ENCODE measurements at regions of chr1 and their contacts with region 1.

Region 1: DNA sequence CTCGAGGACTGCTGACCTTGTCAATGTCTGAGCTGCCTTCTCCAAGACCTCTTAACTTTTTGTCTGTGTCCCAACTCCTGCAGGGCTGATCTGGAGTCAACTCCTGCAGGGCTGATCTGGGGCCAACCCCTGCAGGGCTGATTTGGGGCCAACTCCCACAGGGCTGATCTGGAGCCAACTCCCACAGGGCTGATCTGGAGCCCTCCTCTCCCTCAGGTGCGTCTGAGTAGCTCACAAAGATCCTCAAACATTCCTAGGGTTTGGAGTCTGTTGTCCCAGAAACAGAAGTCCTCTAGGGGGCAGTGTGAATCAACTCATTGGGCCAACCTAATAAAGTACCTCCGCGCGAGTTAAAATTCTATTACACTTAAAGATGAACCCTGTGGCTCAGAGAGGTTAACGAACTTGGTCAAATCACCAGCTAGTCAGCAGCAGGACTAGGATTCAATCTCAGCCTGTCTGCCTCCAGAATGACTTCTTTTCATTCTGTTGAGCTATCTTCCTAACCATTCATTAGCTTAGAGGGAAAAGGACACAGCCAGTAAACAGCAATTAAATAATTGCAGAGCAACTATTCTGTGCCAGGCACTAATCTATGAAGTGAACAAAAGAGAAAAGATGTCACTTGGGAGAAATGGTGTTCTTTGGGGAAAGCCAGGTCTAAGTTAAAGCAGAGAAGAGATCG is 17.2 kb upstream of the RLF start:
- DNase-seq: peak; percentile 68
- ATAC-seq: peak; percentile 83
- H3K4me3 Mint-ChIP-seq: no peak overlapping the region
- H3K27ac Mint-ChIP-seq: no peak overlapping the region
- H3K4me1 Mint-ChIP-seq: peaks cover 16% of the 10 kb centered on the region
- H3K27me3 Mint-ChIP-seq: peaks cover 38% of the 10 kb centered on the region

Region 2: DNA sequence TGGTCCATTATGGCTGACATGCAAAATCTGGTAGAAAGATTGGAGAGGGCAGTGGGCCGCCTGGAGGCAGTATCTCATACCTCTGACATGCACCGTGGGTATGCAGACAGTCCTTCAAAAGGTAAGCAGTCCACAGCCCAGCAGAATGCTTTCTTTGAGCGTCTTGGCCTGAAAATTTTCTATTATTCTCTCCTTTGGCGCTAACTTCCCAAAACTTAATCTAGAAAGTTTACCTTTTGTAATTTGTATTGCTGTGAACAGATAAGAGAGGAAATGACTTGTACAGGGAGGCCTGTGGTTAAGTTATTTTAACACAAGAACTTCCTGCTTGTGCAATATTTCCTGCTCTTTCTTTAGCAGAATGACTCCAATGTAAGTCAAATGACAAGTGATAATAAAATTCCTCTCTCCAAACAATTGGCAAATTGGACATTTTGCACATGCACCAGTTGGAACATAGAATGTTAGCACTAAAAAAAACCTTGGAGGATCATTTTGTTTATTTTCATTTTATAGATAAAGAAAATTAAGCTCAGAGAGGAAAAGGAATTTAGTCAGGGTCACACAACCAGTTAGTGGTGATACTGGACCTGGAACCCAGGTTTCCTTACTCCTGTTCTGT is 84.6 kb before region 1 on chr1:
- CTCF ChIA-PET with region 1: no interaction called
- DNase-seq: peak; percentile 51
- ATAC-seq: peak; percentile 71
- H3K4me3 Mint-ChIP-seq: peak overlapping the region; percentile 62
- H3K27ac Mint-ChIP-seq: peak overlapping the region; percentile 86
- H3K4me1 Mint-ChIP-seq: peaks cover 87% of the 10 kb centered on the region
- H3K27me3 Mint-ChIP-seq: no peaks in the 10 kb centered on the region

Region 3: GRCh38 chr1:40161125-40161887 is 17.3 kb after region 1 on chr1 and contains the start of gene RLF:
- CTCF ChIA-PET with region 1: interaction called, 12 read pairs
- DNase-seq: peak; percentile 96
- ATAC-seq: peak; percentile 97
- H3K4me3 Mint-ChIP-seq: no peak within 1 kb of the TSS
- H3K27ac Mint-ChIP-seq: peak within 1 kb of the TSS; percentile 35
- H3K4me1 Mint-ChIP-seq: peaks cover 9% of the 10 kb centered on the region
- H3K27me3 Mint-ChIP-seq: no peaks in the 10 kb centered on the region
- total RNA-seq, gene RLF: 18.8 to 21.4 TPM

Region 4: DNA sequence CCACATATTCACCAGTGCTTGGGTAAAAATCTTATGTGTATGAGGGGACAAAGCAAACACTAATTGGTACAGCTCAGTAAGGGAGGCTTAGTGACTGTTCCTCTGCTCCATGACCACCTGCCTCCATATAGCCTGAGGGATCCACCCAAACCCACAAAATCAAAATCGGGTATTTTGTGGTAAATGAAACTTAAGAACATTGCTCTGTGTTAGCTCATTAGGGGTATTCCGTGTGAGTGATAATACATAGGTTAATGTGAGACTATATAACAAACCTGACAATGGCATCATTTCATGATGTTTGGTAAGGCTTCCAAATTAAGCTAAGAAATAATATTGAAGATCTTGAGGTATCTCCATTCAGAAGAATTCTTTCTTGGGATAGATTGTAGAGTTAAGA is 147.3 kb after region 1 on chr1:
- CTCF ChIA-PET with region 1: interaction called, 10 read pairs
- DNase-seq: no peak
- ATAC-seq: no peak
- H3K4me3 Mint-ChIP-seq: no peak overlapping the region
- H3K27ac Mint-ChIP-seq: no peak overlapping the region
- H3K4me1 Mint-ChIP-seq: peaks cover 9% of the 10 kb centered on the region
- H3K27me3 Mint-ChIP-seq: no peaks in the 10 kb centered on the region

Region 5: DNA sequence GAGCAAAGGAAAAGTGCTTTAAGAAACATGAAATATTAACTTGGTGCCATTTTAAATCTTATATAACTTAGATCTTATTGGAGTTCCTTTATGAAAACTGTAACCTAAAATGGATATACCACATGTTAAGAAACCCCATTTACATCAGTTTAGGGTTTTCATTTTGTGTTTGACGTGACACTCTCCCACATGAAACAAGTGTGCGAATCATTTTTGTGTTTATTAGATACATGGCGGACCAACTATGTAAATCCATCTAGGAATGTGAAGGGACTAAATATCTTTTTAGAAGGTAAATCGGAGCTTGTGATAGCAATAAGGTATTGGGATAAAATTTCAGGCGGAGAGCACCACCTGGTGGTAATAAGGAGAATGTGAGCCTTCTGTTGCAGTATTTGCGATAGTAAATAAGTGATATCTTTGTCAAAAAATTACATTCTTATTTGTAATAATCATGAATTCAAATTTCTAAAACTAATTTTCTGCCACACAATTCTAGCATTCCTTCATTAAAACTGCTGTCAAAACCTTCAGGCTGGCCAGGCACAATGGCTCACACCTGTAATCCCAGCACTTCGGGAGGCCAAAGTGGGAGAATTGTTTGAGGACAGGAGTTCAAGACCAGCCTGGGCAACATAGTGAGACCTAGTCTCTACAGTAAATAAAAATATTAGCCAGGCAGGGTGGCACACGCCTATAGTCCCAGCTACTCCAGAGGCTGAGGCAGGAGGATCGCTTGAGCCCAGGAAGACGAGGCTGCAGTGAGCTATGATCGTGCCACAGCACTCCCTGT is 260.8 kb after region 1 on chr1:
- CTCF ChIA-PET with region 1: interaction called, 17 read pairs
- DNase-seq: no peak
- ATAC-seq: peak; percentile 50
- H3K4me3 Mint-ChIP-seq: peak overlapping the region; percentile 4
- H3K27ac Mint-ChIP-seq: peak overlapping the region; percentile 82
- H3K4me1 Mint-ChIP-seq: peaks cover 54% of the 10 kb centered on the region
- H3K27me3 Mint-ChIP-seq: no peaks in the 10 kb centered on the region